ENCODE measurements at regions of chr11 and their contacts with region 1.

Region 1: GRCh38 chr11:8911029-8911826 is at the start of gene AKIP1:
- DNase-seq: peak; percentile 89 to 91
- ATAC-seq: peak; percentile 93
- H3K4me3 ChIP-seq: peak within 1 kb of the TSS; percentile 88 to 95 (median 94)
- H3K27ac ChIP-seq: peak within 1 kb of the TSS; percentile 86 to 93 (median 90)
- H3K4me1 ChIP-seq: peaks cover 10 to 21% of the 10 kb centered on the region in 2 donors
- H3K27me3 ChIP-seq: no peaks in the 10 kb centered on the region
- CTCF ChIP-seq: no peak
- POLR2A ChIP-seq: peak in 1 of 2 donors; percentile 51
- total RNA-seq, gene AKIP1: 13.8 to 33.5 (median 25.0) TPM

Region 2: GRCh38 chr11:8807544-8808225 is 103.5 kb before region 1 on chr11:
- in situ Hi-C with region 1: no loop called
- intact Hi-C with region 1: loop called (anchors 5 kb)
- DNase-seq: peak; percentile 35 to 53
- ATAC-seq: peak; percentile 37 to 60
- H3K4me3 ChIP-seq: peak overlapping the region; percentile 30 to 67 (median 50)
- H3K27ac ChIP-seq: peak overlapping the region; percentile 78 to 84 (median 80)
- H3K4me1 ChIP-seq: peaks cover 49 to 57% of the 10 kb centered on the region in 2 donors
- H3K27me3 ChIP-seq: no peaks in the 10 kb centered on the region
- CTCF ChIP-seq: no peak
- POLR2A ChIP-seq: no peak

Region 3: GRCh38 chr11:8870411-8871170 is 40.6 kb before region 1 on chr11:
- in situ Hi-C with region 1: no loop called
- intact Hi-C with region 1: no loop called
- DNase-seq: no peak
- ATAC-seq: peak; percentile 39 to 49
- H3K4me3 ChIP-seq: peak overlapping the region; percentile 74 to 90 (median 78)
- H3K27ac ChIP-seq: peak overlapping the region; percentile 71 to 78 (median 76)
- H3K4me1 ChIP-seq: peaks cover 0 to 16% of the 10 kb centered on the region in 2 donors
- H3K27me3 ChIP-seq: no peaks in the 10 kb centered on the region
- CTCF ChIP-seq: no peak
- POLR2A ChIP-seq: no peak